GM13977 (cell line): ENCODE measurements at regions of chrX and their contacts with region 1.

Region 1: GRCh38 chrX:54695816-54696575 is 102.1 kb downstream of the ITIH6 start:
- DNase-seq: peak; percentile 28
- CTCF ChIP-seq: no peak

Region 2: DNA sequence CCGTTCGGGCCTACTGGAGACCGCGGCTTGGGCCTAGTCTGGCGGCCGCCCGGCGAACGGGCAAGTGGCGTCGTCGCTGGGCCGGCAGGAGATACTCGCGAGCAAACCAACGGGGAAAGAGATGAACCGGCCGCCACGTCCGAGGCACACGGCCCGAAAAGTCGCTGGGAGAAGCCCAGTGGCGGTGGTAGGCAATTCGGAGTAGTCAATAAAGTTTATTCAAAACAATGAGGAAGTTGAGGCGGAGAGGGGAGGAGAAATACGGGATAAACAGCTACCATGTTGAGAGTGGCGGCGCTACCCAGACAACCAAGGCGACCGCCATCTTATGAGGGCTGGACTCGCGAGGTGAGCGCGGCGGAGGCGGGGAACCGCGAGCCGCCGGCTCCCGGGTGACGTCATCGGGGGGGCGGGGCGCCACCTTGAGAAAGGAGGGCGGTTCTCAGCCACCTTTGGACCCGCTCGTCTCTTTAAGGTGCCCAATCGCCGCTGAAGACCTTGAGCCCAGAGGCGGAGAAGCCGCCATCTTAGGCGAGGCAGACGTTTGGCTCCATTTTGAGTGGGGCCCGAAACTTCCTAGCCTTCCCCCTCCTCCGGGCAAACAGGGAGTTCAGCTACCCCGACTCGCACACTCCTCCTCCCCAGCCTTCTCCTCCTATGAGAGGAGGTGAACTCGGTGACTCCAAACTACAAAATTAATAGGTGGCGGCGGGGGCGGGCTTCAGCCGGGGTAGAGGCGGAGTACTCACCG is 651.7 kb before region 1 on chrX and contains the start of gene PHF8:
- in situ Hi-C with region 1: no loop called
- DNase-seq: peak; percentile 85
- CTCF ChIP-seq: no peak

Region 3: DNA sequence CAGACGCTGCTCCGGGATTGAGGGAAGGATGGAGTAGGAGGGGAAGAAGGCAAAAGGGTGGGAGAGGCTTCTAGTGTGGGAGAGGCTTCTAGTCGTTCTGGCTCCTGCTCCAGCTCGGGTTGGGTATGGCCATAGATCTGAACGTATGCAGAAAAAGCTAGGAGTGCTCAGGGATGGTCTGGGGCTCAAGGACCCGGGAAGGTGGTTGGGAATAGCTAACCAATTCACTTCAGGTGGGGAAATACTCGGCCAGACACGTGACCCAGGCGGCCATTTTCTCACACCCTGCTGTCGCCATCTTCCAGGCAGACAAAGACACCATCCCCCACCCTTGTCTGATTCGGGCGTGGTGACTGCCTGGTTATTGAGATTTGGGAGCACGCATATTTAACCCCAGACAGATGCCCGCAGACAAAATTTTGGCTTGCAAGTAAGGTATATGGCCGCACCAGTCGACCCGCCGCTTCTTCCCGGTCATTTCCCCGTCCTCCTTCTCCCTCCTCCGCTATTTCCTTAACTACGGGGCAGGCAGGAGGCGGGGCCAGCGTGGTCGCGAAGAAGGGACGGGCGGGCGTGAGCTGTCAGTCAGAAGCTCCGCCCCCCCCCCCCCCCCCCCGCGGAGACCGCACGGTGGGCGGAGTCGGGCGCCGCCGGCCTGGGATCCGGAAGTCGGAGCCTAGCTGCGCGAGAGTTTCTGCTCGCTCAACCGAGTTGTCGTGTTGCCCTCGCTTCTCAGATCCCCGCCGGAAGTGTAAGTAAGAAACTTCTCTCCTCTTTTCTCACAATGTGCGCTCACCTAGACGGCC is 166.2 kb before region 1 on chrX and contains the start of gene GNL3L:
- in situ Hi-C with region 1: no loop called
- DNase-seq: peak; percentile 89
- CTCF ChIP-seq: no peak

Region 4: GRCh38 chrX:54786962-54787361 is 91.0 kb after region 1 on chrX:
- in situ Hi-C with region 1: loop called (anchors 25 kb)
- DNase-seq: no peak
- CTCF ChIP-seq: peak; percentile 47

Region 5: GRCh38 chrX:55098691-55099090 is 402.7 kb after region 1 on chrX:
- in situ Hi-C with region 1: no loop called
- DNase-seq: no peak
- CTCF ChIP-seq: no peak